ENCODE measurements at regions of chr11 and their contacts with region 1.

Region 1: DNA sequence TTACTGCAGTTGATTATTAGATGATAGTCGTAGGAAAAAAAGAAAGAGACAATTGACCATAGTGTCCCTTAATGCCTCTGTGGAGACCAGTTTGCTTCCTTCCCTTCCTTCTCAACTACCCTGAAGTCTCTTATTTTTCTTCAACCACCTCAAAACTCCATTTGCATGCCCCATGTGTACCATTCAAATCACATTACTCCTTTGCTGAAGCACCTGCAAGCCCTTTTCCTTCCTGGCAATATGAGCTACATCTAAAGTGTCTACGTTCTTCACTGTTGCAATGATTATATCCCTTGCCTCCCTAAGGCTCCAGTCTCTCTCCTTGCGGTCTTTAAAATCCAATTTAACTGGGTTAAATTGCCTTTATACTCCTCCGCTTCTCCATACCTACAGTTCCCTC is 867.4 kb upstream of the API5 start:
- DNase-seq: no peak
- H3K4me3 ChIP-seq: no peak overlapping the region
- H3K27ac ChIP-seq: no peak overlapping the region
- H3K4me1 ChIP-seq: no peaks in the 10 kb centered on the region
- H3K27me3 ChIP-seq: no peaks in the 10 kb centered on the region
- CTCF ChIP-seq: no peak
- POLR2A ChIP-seq: no peak

Region 2: GRCh38 chr11:41879214-41879613 is 565.2 kb before region 1 on chr11:
- intact Hi-C with region 1: no loop called
- DNase-seq: no peak
- H3K4me3 ChIP-seq: no peak overlapping the region
- H3K27ac ChIP-seq: no peak overlapping the region
- H3K4me1 ChIP-seq: no peaks in the 10 kb centered on the region
- H3K27me3 ChIP-seq: no peaks in the 10 kb centered on the region
- CTCF ChIP-seq: no peak
- POLR2A ChIP-seq: no peak

Region 3: DNA sequence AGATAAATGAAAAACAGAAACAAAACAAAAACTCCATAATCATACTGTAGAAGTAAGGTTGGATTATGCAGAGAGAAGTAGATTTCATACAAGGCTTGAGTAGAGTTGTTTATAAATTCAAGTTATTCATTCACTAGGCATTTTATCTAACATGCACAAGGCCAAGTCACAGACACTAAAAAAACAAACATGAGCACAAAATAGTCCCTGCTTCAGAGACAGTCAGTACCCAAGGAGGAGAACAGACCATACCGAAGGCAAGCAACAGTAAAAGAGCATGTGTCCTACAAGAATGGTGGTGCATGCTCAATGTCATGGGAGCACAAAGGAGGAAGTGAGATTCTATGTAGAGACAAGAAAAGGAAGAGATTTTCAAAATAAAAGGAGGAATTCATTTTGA is 188.5 kb before region 1 on chr11:
- intact Hi-C with region 1: no loop called
- DNase-seq: no peak
- H3K4me3 ChIP-seq: no peak overlapping the region
- H3K27ac ChIP-seq: no peak overlapping the region
- H3K4me1 ChIP-seq: no peaks in the 10 kb centered on the region
- H3K27me3 ChIP-seq: no peaks in the 10 kb centered on the region
- CTCF ChIP-seq: no peak
- POLR2A ChIP-seq: no peak

Region 4: DNA sequence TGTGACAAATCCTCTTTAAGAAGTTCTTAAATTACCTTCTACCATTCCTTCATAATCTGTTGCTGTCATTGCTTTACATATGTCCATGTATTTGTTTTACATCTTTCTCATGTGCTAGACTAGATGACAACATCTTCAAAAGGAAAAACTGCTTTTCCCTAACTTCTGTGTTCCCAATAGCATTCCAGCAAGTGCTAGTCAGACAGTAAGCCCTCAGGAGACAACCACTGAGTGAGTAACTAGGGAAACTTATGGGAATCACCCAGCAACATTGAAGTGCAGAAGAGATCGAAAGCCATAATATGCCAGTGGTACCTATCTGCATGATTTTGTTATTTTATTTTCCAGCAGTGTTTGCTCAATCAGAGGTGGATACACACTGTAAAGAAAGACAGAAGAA is 22.3 kb before region 1 on chr11:
- intact Hi-C with region 1: loop called (anchors 2 kb)
- DNase-seq: no peak
- H3K4me3 ChIP-seq: no peak overlapping the region
- H3K27ac ChIP-seq: no peak overlapping the region
- H3K4me1 ChIP-seq: no peaks in the 10 kb centered on the region
- H3K27me3 ChIP-seq: no peaks in the 10 kb centered on the region
- CTCF ChIP-seq: no peak
- POLR2A ChIP-seq: no peak

Region 5: GRCh38 chr11:42498971-42499370 is 54.6 kb after region 1 on chr11:
- intact Hi-C with region 1: no loop called
- DNase-seq: no peak
- H3K4me3 ChIP-seq: no peak overlapping the region
- H3K27ac ChIP-seq: no peak overlapping the region
- H3K4me1 ChIP-seq: no peaks in the 10 kb centered on the region
- H3K27me3 ChIP-seq: no peaks in the 10 kb centered on the region
- CTCF ChIP-seq: no peak
- POLR2A ChIP-seq: no peak

Measured in vagina (tissue), 2 donors.